Tibial artery (tissue), 4 donors: ENCODE measurements at regions of chr7 and their contacts with region 1.

Region 1: GRCh38 chr7:94436018-94436604 is 41.4 kb downstream of the COL1A2 start:
- DNase-seq: peak; percentile 80
- H3K4me3 ChIP-seq: no peak overlapping the region
- H3K27ac ChIP-seq: no peak overlapping the region
- H3K4me1 ChIP-seq: no peaks in the 10 kb centered on the region
- H3K27me3 ChIP-seq: no peaks in the 10 kb centered on the region
- CTCF ChIP-seq: peak; percentile 82

Region 2: DNA sequence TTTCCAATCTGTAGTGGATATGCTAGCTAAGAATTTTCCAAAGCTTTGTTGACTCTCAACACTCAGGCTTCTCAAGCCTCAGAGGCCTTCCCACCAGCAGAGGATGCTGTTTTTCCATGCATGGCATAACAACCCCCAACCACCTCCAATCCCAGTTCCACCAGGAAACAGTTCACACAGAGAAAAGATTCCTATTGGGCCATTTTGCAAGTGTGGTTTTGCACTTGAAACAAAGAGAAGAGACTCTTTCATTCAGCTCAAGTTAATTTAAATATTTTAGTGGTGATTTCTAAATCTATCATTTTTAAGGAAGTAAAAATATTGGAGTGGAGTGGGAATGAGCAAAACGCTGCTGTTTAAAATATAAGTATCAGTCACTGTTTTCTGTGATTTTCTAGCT is 147.0 kb before region 1 on chr7:
- intact Hi-C with region 1: loop called (anchors 5 kb)
- DNase-seq: peak; percentile 74 to 81
- H3K4me3 ChIP-seq: no peak overlapping the region
- H3K27ac ChIP-seq: no peak overlapping the region
- H3K4me1 ChIP-seq: no peaks in the 10 kb centered on the region
- H3K27me3 ChIP-seq: no peaks in the 10 kb centered on the region
- CTCF ChIP-seq: peak; percentile 91 to 96

Region 3: GRCh38 chr7:94374721-94375566 is 61.2 kb before region 1 on chr7:
- intact Hi-C with region 1: no loop called
- DNase-seq: peak; percentile 70 to 81
- H3K4me3 ChIP-seq: peak overlapping the region; percentile 20 to 27
- H3K27ac ChIP-seq: peak overlapping the region; percentile 78 to 84
- H3K4me1 ChIP-seq: peaks cover 0 to 42% (median 24%) of the 10 kb centered on the region in 4 donors
- H3K27me3 ChIP-seq: no peaks in the 10 kb centered on the region
- CTCF ChIP-seq: no peak

Region 4: DNA sequence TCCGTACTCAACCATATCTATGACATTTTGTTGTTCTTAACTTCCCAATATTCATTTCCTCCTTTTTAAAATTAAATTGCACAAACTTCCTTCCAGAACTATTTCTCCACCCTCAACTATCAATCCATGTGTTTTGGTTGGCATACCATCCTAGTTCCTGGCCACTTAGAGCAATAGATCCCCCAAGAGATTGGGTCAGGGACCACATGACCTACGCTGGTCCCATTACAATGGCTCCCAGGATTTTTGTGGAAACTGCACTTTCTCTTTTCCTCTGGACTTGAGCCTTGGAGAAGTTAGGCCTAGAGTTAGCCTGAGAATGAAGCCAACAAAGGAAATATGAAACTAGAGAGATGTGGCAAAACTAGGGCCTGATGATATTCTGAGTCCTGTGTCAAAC is 17.8 kb after region 1 on chr7:
- intact Hi-C with region 1: no loop called
- DNase-seq: no peak
- H3K4me3 ChIP-seq: no peak overlapping the region
- H3K27ac ChIP-seq: no peak overlapping the region
- H3K4me1 ChIP-seq: no peaks in the 10 kb centered on the region
- H3K27me3 ChIP-seq: no peaks in the 10 kb centered on the region
- CTCF ChIP-seq: no peak

Region 5: DNA sequence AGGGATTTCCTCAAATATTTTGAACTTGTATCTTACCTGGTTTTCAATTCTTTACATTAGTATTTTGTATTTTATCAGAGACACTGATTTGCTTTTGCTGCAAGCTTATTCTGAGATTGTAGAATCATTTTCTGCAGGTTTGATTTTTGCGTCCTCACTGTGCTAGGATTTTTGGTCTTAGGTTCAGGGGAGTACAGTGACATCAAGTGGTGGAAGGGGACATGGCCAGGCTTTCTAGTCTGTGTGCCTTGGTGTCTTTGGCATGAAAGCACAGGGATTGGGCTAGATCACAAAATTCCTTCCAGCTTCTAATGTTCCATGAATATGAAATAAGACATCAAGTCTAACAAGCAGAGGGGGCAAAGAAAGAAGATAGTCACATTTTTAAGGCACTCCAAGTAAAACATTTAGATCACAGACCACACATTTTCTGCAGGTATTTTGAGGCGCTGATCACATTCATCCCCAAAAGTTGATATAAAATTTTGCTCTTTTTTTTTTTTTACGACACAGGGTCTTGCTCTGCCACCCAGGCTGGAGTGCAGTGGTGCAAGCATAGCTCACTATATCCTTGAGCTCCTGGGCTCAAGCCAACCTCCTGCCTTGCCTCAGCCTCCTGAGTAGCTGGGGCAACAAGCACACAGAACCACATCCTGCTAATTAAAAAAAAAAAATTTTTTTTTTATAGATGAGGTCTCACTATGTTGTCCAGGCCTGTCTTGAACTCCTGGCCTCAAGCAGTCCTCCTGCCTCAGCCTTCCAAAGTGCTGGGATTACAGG is 763.9 kb after region 1 on chr7:
- intact Hi-C with region 1: loop called (anchors 10 kb)
- DNase-seq: peak in 1 of 2 donors; percentile 23
- H3K4me3 ChIP-seq: no peak overlapping the region
- H3K27ac ChIP-seq: no peak overlapping the region
- H3K4me1 ChIP-seq: peaks cover 0 to 7% (median 0%) of the 10 kb centered on the region in 4 donors
- H3K27me3 ChIP-seq: no peaks in the 10 kb centered on the region
- CTCF ChIP-seq: peak; percentile 52 to 61